Mammary epithelial cell (primary cell): ENCODE measurements at regions of chr17 and their contacts with region 1.

Region 1: GRCh38 chr17:30104575-30105339 is 11.9 kb upstream of the NSRP1 start:
- DNase-seq: peak; percentile 59
- H3K4me3 ChIP-seq: peak overlapping the region in 2 of 3 experiments; percentile 15 to 41
- H3K27ac ChIP-seq: no peak overlapping the region
- H3K4me1 ChIP-seq: no peaks in the 10 kb centered on the region
- H3K27me3 ChIP-seq: peaks cover 3% of the 10 kb centered on the region
- CTCF ChIP-seq: peak; percentile 88 to 92

Region 2: DNA sequence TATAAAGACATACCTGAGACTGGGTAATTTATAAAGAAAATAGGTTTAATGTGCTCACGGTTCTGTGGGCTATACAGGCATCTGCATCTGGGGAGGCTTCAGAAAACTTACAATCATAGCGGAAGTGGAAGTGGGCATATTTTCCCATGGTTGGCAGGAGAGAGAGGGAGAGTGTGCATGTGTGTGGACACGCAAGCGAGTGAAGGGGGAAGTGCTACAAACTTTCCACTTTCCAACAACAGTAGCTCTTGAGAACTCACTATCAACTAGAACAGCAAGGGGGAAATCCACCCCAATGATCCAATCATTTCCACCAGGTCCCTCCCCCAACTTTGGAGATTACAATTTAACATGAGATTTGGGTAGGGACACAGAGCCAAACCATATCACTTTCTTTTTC is 703.5 kb before region 1 on chr17:
- CTCF ChIA-PET with region 1: no interaction called
- dilution Hi-C with region 1: no loop called
- in situ Hi-C with region 1: no loop called
- intact Hi-C with region 1: no loop called
- DNase-seq: no peak
- H3K4me3 ChIP-seq: no peak overlapping the region
- H3K27ac ChIP-seq: no peak overlapping the region
- H3K4me1 ChIP-seq: no peaks in the 10 kb centered on the region
- H3K27me3 ChIP-seq: no peaks in the 10 kb centered on the region
- CTCF ChIP-seq: no peak

Region 3: DNA sequence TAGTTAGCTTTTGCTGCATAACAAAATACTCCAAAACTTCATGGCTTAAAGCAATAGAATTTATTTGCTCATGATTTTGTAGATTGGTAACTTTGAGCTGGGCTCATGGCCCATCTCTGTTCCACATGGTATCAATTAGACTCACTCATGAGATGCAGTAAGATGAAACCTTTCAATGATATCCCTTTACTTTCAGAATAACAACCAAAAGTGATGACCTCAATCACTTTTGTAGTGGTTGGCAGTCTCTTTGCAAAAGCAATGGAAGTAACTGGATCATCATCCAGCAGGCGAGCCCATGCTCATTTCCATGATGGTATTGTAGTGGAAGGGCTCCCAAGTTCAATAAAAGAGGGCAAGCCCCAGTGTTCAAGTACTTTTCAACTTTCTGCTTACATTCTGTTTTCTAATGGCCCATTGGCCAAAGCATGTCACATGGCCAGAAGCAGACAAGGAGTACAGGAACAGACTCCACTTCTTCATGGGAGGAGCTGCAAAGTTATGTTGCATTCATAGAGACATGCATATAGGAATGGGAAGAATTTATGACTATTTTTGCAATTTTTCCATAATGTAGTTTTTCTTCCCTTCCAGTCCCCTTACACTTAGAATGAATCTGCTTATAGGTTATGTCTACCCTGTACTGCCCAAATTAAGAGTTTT is 121.6 kb before region 1 on chr17:
- CTCF ChIA-PET with region 1: no interaction called
- dilution Hi-C with region 1: no loop called
- in situ Hi-C with region 1: no loop called
- intact Hi-C with region 1: no loop called
- DNase-seq: no peak
- H3K4me3 ChIP-seq: no peak overlapping the region
- H3K27ac ChIP-seq: no peak overlapping the region
- H3K4me1 ChIP-seq: no peaks in the 10 kb centered on the region
- H3K27me3 ChIP-seq: no peaks in the 10 kb centered on the region
- CTCF ChIP-seq: no peak

Region 4: DNA sequence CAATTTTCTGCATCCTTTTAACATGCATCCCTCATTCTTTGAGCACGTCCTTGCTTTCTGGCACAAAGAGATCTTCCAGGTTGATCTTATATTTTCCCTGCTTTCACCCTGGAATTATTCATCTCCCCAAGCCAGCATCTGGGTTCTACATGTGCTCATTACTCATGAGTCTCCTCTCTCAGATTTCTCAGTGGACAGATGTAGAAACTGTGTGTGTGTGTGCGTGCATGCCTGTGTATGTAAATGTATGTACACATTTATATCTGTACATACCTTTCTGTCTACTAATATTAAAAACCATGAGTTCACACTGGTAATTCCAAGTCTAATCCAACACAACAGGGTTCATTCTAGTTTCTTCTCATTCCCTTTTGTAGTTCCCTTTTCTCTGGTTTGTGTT is 30.0 kb before region 1 on chr17:
- CTCF ChIA-PET with region 1: no interaction called
- dilution Hi-C with region 1: no loop called
- in situ Hi-C with region 1: no loop called
- intact Hi-C with region 1: no loop called
- DNase-seq: no peak
- H3K4me3 ChIP-seq: no peak overlapping the region
- H3K27ac ChIP-seq: no peak overlapping the region
- H3K4me1 ChIP-seq: no peaks in the 10 kb centered on the region
- H3K27me3 ChIP-seq: peaks cover 7% of the 10 kb centered on the region
- CTCF ChIP-seq: no peak

Region 5: GRCh38 chr17:30278032-30278431 is 173.3 kb after region 1 on chr17:
- CTCF ChIA-PET with region 1: interaction called, 6 read pairs
- dilution Hi-C with region 1: no loop called
- in situ Hi-C with region 1: no loop called
- intact Hi-C with region 1: loop called (anchors 1 kb)
- DNase-seq: no peak
- H3K4me3 ChIP-seq: no peak overlapping the region
- H3K27ac ChIP-seq: no peak overlapping the region
- H3K4me1 ChIP-seq: no peaks in the 10 kb centered on the region
- H3K27me3 ChIP-seq: peaks cover 43% of the 10 kb centered on the region
- CTCF ChIP-seq: peak; percentile 15 to 16

Region 6: GRCh38 chr17:30389831-30390230 is 285.1 kb after region 1 on chr17:
- CTCF ChIA-PET with region 1: no interaction called
- dilution Hi-C with region 1: no loop called
- in situ Hi-C with region 1: no loop called
- intact Hi-C with region 1: no loop called
- DNase-seq: no peak
- H3K4me3 ChIP-seq: no peak overlapping the region
- H3K27ac ChIP-seq: no peak overlapping the region
- H3K4me1 ChIP-seq: no peaks in the 10 kb centered on the region
- H3K27me3 ChIP-seq: no peaks in the 10 kb centered on the region
- CTCF ChIP-seq: no peak

Region 7: GRCh38 chr17:30477083-30477773 is 372.5 kb after region 1 on chr17 and contains the start of gene GOSR1:
- CTCF ChIA-PET with region 1: no interaction called
- dilution Hi-C with region 1: no loop called
- in situ Hi-C with region 1: no loop called
- intact Hi-C with region 1: loop called (anchors 5 kb)
- DNase-seq: peak; percentile 90
- H3K4me3 ChIP-seq: peak within 1 kb of the TSS; percentile 81 to 99 (median 86)
- H3K27ac ChIP-seq: peak within 1 kb of the TSS; percentile 91
- H3K4me1 ChIP-seq: peaks cover 17% of the 10 kb centered on the region
- H3K27me3 ChIP-seq: no peaks in the 10 kb centered on the region
- CTCF ChIP-seq: peak; percentile 59 to 79
- total RNA-seq, gene GOSR1: 27.8 to 54.6 TPM

Region 8: DNA sequence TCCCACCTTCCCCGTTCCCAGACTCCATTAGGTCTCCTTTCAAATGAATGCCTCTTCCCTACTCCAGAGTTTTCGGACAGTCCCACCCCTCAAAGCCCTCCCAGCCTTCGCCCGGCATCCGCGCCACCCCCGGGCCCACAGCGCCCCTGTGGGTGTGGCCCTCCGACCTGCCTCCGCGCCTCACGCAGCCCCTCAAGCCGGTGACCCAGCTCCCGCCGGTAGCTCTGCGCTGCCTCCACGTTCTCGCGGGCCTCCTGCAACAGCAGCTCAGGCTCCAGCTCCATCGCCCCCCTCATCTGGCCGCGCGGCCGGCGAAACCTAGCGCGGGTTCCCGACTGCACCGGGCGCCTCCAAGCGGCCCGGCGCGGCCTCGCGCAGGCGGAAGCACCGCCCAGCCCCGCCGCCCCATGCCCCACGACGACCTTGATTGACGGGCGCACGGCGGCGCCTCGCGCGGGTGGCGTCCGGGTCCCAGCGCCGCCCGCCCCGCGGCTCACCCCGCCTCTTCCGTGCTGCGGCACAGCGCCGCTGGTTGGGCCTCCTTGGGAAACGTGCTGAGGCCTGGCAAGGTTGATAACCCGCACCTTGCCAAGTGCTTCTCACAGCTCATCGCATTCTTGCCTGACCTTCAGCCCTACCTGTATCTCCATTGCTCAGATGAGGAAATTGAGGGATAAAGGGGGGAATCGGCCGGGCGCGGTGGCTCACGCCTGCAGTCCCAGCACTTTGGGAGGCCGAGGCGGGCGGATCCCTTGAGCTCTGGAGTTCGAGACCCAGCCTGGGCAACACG is 719.8 kb after region 1 on chr17 and contains the start of gene CRLF3:
- CTCF ChIA-PET with region 1: no interaction called
- dilution Hi-C with region 1: no loop called
- in situ Hi-C with region 1: no loop called
- intact Hi-C with region 1: loop called (anchors 10 kb)
- DNase-seq: peak; percentile 92
- H3K4me3 ChIP-seq: peak within 1 kb of the TSS; percentile 81 to 94 (median 86)
- H3K27ac ChIP-seq: peak within 1 kb of the TSS; percentile 49
- H3K4me1 ChIP-seq: peaks cover 16% of the 10 kb centered on the region
- H3K27me3 ChIP-seq: no peaks in the 10 kb centered on the region
- CTCF ChIP-seq: peak; percentile 30 to 51
- total RNA-seq, gene CRLF3: 18.7 to 20.7 TPM